ENCODE measurements at regions of chr5 and their contacts with region 1.

Region 1: DNA sequence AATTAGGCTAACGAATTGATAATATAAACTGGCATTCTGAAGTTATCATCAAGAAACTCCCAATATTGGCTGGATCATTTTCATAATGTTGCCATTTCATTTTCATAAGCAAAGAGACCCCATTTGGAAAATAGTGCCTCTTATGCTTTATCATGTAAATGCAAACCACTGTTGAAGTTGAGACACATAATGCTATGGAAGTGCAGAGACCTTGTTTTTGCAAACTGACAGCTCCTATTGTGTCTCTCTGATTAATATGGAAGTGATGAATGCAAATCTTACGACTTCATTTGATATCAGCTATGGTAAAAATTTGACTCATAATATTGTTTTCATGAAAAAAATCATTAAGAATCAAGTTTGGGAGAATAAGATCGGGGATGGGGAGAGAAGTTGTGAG is 25.3 kb upstream of the ZNF608 start:
- DNase-seq: no peak
- H3K4me3 ChIP-seq: no peak overlapping the region
- H3K27ac ChIP-seq: no peak overlapping the region
- H3K4me1 ChIP-seq: no peaks in the 10 kb centered on the region
- H3K27me3 ChIP-seq: no peaks in the 10 kb centered on the region
- CTCF ChIP-seq: no peak

Region 2: DNA sequence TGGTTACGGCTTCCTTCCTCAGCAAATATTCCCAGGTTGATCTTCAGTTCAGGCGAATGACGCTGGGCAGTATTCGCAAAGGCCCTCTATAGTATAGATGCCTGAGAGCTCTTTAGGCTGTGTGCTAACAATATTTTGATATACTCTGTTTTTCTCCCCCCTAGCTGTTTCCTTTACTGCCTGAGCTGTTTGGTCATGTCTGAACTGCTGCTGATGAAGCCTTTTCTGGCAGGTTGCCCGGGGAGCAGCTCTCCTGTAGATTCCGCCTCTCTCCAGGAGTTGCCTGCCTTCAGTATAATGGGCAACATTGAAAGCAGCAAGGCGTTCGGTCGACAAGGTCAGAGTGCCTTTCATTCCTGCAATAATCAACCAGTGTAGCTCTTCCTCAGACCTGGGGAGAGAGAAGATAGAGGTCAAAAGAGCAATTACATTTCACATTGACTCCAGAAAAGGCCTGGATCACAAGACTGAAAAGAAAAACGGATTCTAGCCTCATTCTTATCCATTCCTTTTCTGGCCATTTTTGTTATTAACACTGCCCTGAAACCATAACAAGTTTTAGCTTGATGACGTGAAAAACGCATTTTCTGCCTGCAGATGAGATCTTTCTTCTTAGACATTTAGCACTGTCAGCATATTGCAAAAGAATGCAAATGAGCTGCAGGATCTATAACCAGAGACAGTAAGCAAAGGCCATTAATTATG is 34.8 kb after region 1 on chr5:
- CTCF ChIA-PET with region 1: no interaction called
- POLR2A ChIA-PET with region 1: interaction called, 15 read pairs
- intact Hi-C with region 1: no loop called
- DNase-seq: peak in 1 of 2 experiments; percentile 8
- H3K4me3 ChIP-seq: no peak overlapping the region
- H3K27ac ChIP-seq: no peak overlapping the region
- H3K4me1 ChIP-seq: no peaks in the 10 kb centered on the region
- H3K27me3 ChIP-seq: no peaks in the 10 kb centered on the region
- CTCF ChIP-seq: no peak

Region 3: DNA sequence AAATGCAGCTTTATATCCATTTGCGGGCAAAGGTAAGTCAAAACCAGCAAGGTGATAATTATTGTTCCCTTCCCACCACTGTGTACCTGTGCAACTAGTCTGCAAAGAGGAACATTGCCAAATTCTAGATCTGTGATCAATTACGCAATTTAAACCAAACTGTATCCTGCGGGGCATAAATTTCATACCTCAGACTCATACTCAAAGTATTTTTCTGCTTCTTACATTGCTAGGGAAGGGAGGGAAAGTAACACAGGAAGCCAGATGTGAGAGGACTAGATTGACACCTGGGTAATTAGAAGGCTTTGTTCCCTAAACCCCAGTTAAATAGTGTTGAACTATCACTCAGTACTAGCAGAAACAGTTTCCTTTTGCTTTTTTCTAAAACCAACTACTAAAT is 214.9 kb after region 1 on chr5:
- CTCF ChIA-PET with region 1: no interaction called
- POLR2A ChIA-PET with region 1: no interaction called
- intact Hi-C with region 1: no loop called
- DNase-seq: peak in 1 of 2 experiments; percentile 88
- H3K4me3 ChIP-seq: no peak overlapping the region
- H3K27ac ChIP-seq: peak overlapping the region; percentile 44
- H3K4me1 ChIP-seq: peaks cover 14% of the 10 kb centered on the region
- H3K27me3 ChIP-seq: no peaks in the 10 kb centered on the region
- CTCF ChIP-seq: no peak

Region 4: DNA sequence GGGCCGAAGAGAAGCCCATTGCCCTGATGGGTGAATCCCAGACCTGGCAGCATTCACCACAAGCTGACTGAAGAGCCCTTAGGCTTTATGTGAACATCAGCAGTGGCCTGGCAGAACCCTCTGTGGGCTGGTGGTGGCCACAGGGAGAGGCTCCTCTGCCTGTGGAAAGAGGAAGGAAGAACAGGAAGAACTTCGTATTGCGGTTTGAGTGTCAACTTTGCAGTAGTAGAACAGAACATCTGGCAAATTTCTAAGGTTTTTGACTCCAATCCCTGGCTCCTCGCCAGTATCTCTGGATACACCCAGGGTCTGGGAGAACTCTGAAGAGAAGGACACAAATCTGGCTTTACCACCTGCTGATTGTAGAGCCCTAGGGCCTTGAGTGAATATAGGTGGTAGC is 1295.1 kb after region 1 on chr5:
- CTCF ChIA-PET with region 1: no interaction called
- POLR2A ChIA-PET with region 1: no interaction called
- intact Hi-C with region 1: no loop called
- DNase-seq: no peak
- H3K4me3 ChIP-seq: no peak overlapping the region
- H3K27ac ChIP-seq: no peak overlapping the region
- H3K4me1 ChIP-seq: no peaks in the 10 kb centered on the region
- H3K27me3 ChIP-seq: no peaks in the 10 kb centered on the region
- CTCF ChIP-seq: no peak

Measured in PC-9 (cell line).